Activated CD4-positive, alpha-beta memory T cell treated with anti-CD3 and anti-CD28 coated beads for 36 hours (primary cell): ENCODE measurements at regions of chr5 and their contacts with region 1.

Region 1: DNA sequence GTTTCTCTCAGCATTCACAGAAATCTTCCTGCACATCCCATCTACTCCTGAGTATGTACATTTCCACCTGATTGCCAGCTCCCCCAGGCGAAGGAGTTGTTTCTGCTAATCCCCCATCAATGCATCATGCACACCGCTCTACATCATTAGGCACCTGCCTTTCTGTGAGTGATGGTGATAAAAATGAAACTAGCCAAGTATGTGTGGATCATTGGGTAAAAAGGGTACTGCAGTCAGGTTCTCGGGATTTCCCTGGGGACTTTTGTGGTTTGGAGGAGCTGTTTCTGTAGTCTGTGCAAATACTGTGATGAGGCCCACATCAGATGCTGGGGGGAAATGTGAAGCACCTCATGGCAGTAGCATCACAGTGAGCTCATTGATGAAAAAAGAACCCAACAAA is 30.4 kb downstream of the CAMK4 start:
- DNase-seq: peak; percentile 89
- H3K4me3 Mint-ChIP-seq: peak overlapping the region; percentile 57
- H3K27ac Mint-ChIP-seq: peak overlapping the region; percentile 85
- H3K4me1 Mint-ChIP-seq: peaks cover 92% of the 10 kb centered on the region
- H3K27me3 Mint-ChIP-seq: no peaks in the 10 kb centered on the region

Region 2: DNA sequence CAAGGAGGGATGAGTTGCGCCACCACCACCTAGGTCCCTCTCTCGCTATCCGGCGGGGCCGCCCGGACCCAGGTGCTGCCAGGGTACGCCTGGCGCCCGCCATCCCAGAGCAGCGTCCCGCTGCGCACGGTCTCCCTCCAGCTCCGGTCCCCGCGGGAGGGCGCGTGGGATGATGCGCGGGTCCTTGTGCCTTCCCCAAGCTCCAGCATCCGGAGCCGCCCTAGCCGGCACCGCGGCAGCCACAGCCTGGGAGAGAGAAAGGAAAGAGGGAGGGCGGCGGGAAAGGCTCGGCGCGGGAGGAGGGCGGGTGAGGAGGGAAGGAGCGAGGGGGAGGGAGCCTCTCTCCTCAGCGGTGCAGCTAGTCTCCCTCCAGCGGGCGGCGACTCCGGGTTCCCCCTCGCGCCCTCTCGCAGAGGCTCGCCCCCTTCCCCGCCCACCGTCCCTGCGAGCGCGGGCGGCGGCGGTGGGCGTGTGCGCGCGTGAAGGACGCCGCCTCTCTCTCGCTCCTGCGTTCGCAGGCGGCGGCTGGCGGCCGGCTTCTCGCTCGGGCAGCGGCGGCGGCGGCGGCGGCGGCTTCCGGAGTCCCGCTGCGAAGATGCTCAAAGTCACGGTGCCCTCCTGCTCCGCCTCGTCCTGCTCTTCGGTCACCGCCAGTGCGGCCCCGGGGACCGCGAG is 30.6 kb before region 1 on chr5 and contains the start of gene CAMK4:
- CTCF ChIA-PET with region 1: interaction called, 44 read pairs
- POLR2A ChIA-PET with region 1: interaction called, 33 read pairs
- intact Hi-C with region 1: loop called (anchors 1 kb)
- DNase-seq: peak; percentile 77
- H3K4me3 Mint-ChIP-seq: peak within 1 kb of the TSS; percentile 89
- H3K27ac Mint-ChIP-seq: peak within 1 kb of the TSS; percentile 90
- H3K4me1 Mint-ChIP-seq: peaks cover 34% of the 10 kb centered on the region
- H3K27me3 Mint-ChIP-seq: no peaks in the 10 kb centered on the region
- total RNA-seq, gene CAMK4: 33.3 to 36.5 TPM

Region 3: GRCh38 chr5:111229871-111230810 is 24.5 kb before region 1 on chr5:
- CTCF ChIA-PET with region 1: interaction called, 44 read pairs
- POLR2A ChIA-PET with region 1: interaction called, 42 read pairs
- intact Hi-C with region 1: loop called (anchors 1 kb)
- DNase-seq: no peak
- H3K4me3 Mint-ChIP-seq: peak overlapping the region; percentile 66
- H3K27ac Mint-ChIP-seq: peak overlapping the region; percentile 85
- H3K4me1 Mint-ChIP-seq: peaks cover 81% of the 10 kb centered on the region
- H3K27me3 Mint-ChIP-seq: no peaks in the 10 kb centered on the region

Region 4: GRCh38 chr5:111237470-111237869 is 17.1 kb before region 1 on chr5:
- CTCF ChIA-PET with region 1: interaction called, 33 read pairs
- POLR2A ChIA-PET with region 1: interaction called, 42 read pairs
- intact Hi-C with region 1: loop called (anchors 1 kb)
- DNase-seq: no peak
- H3K4me3 Mint-ChIP-seq: peak overlapping the region; percentile 61
- H3K27ac Mint-ChIP-seq: peak overlapping the region; percentile 83
- H3K4me1 Mint-ChIP-seq: peaks cover 92% of the 10 kb centered on the region
- H3K27me3 Mint-ChIP-seq: no peaks in the 10 kb centered on the region

Region 5: GRCh38 chr5:111278845-111279504 is 24.4 kb after region 1 on chr5:
- CTCF ChIA-PET with region 1: interaction called, 26 read pairs
- POLR2A ChIA-PET with region 1: no interaction called
- intact Hi-C with region 1: loop called (anchors 1 kb)
- DNase-seq: peak; percentile 92
- H3K4me3 Mint-ChIP-seq: no peak overlapping the region
- H3K27ac Mint-ChIP-seq: no peak overlapping the region
- H3K4me1 Mint-ChIP-seq: peaks cover 60% of the 10 kb centered on the region
- H3K27me3 Mint-ChIP-seq: no peaks in the 10 kb centered on the region

Region 6: DNA sequence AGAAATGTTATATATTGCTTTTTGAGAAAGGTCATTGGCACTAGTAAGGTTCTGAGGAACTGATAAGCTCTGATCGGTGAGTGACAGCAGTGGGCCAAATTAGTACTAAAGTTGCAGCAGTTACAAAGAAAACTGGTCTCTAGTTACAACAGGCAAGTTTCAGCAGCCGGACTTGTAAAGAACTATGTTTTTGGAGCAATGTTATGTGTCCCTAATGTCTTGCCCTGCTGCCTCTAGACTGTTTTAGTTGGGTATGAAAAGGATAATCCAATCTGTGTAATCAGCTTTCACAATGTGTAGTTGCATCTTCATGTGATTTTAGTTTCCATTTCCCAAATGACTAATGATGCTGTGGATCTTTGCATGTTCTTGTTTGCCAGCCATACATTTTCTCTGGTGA is 83.1 kb after region 1 on chr5:
- CTCF ChIA-PET with region 1: no interaction called
- POLR2A ChIA-PET with region 1: no interaction called
- intact Hi-C with region 1: loop called (anchors 1 kb)
- DNase-seq: peak; percentile 9
- H3K4me3 Mint-ChIP-seq: no peak overlapping the region
- H3K27ac Mint-ChIP-seq: peak overlapping the region; percentile 76
- H3K4me1 Mint-ChIP-seq: peaks cover 70% of the 10 kb centered on the region
- H3K27me3 Mint-ChIP-seq: no peaks in the 10 kb centered on the region

Region 7: DNA sequence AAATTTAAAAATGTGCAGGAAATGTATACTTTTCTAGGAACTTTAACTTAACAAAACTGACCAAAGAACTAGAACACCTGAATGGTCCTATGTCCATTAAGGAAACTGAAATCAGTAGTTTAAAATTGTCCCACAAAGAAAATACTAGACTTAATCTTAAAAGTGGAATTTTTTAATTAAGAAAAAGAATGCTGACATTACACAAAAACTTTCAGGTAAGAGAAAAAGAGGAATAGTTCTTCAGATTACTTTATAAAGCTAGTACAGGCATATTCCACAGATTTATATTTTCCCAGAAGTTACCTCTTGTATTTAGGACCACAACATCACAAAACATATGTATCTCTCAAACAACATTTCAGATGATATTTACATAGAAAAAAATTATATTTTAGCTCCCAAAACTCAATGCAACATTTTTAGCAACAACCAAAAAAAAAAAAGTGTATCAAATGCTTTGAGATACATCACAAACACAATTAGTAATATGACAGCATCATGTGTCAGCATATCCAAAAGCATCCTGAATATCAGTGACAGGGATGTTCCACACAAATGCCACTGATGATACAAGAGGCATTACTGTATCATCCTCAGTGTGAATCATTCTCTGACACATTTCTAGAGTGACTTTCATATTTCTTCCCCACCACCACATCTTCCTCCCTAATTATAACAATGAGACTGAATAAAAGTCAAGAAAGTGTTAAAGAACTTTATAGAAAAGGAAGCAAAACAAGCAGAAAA is 900.5 kb after region 1 on chr5:
- CTCF ChIA-PET with region 1: no interaction called
- POLR2A ChIA-PET with region 1: no interaction called
- intact Hi-C with region 1: loop called (anchors 10 kb)
- DNase-seq: no peak
- H3K4me3 Mint-ChIP-seq: no peak overlapping the region
- H3K27ac Mint-ChIP-seq: no peak overlapping the region
- H3K4me1 Mint-ChIP-seq: peaks cover 8% of the 10 kb centered on the region
- H3K27me3 Mint-ChIP-seq: peaks cover 2% of the 10 kb centered on the region